PC-3 (cell line): ENCODE measurements at regions of chr1 and their contacts with region 1.

Region 1: DNA sequence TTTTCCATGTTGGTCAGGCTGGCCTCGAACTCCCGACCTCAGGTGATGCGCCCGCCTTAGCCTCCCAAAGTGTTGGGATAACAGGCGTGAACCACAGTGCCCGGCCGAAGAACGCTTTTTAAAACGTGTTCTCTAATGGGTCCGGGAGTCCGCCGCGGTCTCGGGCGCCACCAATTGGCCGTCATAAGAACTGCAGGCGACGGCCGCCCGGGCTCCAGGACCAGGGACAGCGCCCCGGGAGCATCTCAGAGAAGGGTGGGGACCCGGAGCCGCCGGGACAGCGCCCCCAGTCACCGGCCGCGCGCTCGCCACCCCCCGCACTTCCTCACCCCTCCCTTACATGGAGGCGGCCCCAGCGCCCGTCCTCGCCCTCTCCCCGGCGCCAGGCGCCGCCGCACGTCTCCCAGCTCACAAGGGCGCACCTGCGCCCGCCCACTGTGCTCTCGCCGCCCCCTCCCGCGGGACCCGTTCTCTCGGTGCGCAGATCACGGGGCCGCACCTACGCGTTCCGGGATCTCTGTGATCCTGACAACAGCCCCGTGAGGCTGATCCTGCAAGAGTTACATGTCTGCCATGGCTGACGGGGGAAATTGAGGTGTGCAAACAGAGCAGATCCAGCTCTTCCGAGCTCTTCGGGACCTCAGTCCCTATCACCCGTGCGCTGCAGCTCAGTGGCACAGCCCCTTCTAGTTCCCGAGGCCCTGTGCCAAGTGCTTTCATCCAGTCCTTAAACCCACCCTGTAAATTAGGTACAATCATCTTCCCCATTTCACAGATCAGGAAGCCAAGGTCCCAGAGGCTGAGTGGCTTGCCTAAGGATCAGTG is 9.8 kb downstream of the RAP1GAP start:
- DNase-seq: peak; percentile 69
- ATAC-seq: peak; percentile 74
- H3K4me3 ChIP-seq: peak overlapping the region; percentile 47; the same call in 1 of the 2 replicates
- H3K27ac ChIP-seq: no peak overlapping the region
- H3K4me1 ChIP-seq: 0 out of 2 replicates have a peak, but pooled peaks cover 3% of the 10 kb centered on the region
- H3K27me3 ChIP-seq: 0 out of 2 replicates have a peak, but pooled peaks cover 6% of the 10 kb centered on the region
- CTCF ChIP-seq: peak; percentile 75

Region 2: GRCh38 chr1:21362096-21362495 is 297.2 kb before region 1 on chr1:
- CTCF ChIA-PET with region 1: no interaction called
- POLR2A ChIA-PET with region 1: no interaction called
- intact Hi-C with region 1: no loop called
- DNase-seq: no peak
- ATAC-seq: no peak
- H3K4me3 ChIP-seq: no peak overlapping the region
- H3K27ac ChIP-seq: no peak overlapping the region
- H3K4me1 ChIP-seq: no peaks in the 10 kb centered on the region
- H3K27me3 ChIP-seq: no peaks in the 10 kb centered on the region
- CTCF ChIP-seq: no peak

Region 3: GRCh38 chr1:21508580-21509350 is 150.5 kb before region 1 on chr1:
- CTCF ChIA-PET with region 1: no interaction called
- POLR2A ChIA-PET with region 1: no interaction called
- intact Hi-C with region 1: loop called (anchors 5 kb)
- DNase-seq: peak; percentile 63
- ATAC-seq: peak; percentile 92
- H3K4me3 ChIP-seq: peak overlapping the region; percentile 55
- H3K27ac ChIP-seq: no peak overlapping the region
- H3K4me1 ChIP-seq: peaks cover 4% of the 10 kb centered on the region; the same call in 1 of the 2 replicates
- H3K27me3 ChIP-seq: peaks cover 15% of the 10 kb centered on the region; the same call in 1 of the 2 replicates
- CTCF ChIP-seq: peak; percentile 49

Region 4: GRCh38 chr1:21594935-21595897 is 64.1 kb before region 1 on chr1:
- CTCF ChIA-PET with region 1: no interaction called
- POLR2A ChIA-PET with region 1: no interaction called
- intact Hi-C with region 1: loop called (anchors 10 kb)
- DNase-seq: peak; percentile 60
- ATAC-seq: 0 out of 2 replicates have a peak, but pooled peaks have one; percentile 21
- H3K4me3 ChIP-seq: no peak overlapping the region
- H3K27ac ChIP-seq: no peak overlapping the region
- H3K4me1 ChIP-seq: no peaks in the 10 kb centered on the region
- H3K27me3 ChIP-seq: no peaks in the 10 kb centered on the region
- CTCF ChIP-seq: peak; percentile 79